ENCODE measurements at regions of chr5 and their contacts with region 1.

Region 1: DNA sequence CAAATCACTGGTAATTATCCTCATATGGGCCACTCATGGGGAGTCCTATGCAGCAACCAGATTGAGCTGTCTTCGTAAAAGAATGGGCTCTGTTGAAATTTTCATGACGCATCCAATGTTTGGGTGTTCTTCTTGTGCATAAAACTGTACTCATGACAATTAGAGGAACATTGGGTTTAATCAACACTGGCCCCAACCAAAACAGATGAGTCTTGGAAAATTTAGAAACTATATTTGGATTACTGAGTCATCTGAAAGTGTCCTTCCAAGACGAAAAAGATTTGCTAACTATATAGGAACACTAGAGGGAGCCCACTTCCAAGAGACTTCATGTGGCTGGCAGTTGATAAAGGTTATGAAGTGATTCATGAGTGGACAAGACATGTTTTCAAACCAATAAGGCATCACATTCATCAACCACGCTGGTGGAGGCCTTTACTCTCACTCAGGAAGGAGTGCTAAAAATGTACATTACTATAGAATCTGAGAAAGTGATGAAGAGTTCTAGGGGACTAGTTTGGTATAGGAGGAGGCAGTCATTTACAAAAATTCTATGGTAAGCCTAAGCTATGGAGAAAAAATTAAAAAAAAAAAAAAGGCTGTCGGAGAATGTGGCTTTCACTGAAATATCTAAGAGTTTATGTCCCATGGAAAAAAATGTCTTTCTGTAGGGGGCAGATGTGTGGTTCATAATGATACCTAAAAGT is 313.5 kb downstream of the PRDM9 start:
- DNase-seq: no peak
- ATAC-seq: peak in 1 of 2 donors; percentile 41
- H3K4me3 ChIP-seq: no peak overlapping the region
- H3K27ac ChIP-seq: no peak overlapping the region
- H3K4me1 ChIP-seq: no peaks in the 10 kb centered on the region
- H3K27me3 ChIP-seq: no peaks in the 10 kb centered on the region

Region 2: GRCh38 chr5:23614422-23614821 is 206.5 kb before region 1 on chr5:
- intact Hi-C with region 1: no loop called
- DNase-seq: no peak
- ATAC-seq: no peak
- H3K4me3 ChIP-seq: no peak overlapping the region
- H3K27ac ChIP-seq: no peak overlapping the region
- H3K4me1 ChIP-seq: no peaks in the 10 kb centered on the region
- H3K27me3 ChIP-seq: no peaks in the 10 kb centered on the region

Region 3: DNA sequence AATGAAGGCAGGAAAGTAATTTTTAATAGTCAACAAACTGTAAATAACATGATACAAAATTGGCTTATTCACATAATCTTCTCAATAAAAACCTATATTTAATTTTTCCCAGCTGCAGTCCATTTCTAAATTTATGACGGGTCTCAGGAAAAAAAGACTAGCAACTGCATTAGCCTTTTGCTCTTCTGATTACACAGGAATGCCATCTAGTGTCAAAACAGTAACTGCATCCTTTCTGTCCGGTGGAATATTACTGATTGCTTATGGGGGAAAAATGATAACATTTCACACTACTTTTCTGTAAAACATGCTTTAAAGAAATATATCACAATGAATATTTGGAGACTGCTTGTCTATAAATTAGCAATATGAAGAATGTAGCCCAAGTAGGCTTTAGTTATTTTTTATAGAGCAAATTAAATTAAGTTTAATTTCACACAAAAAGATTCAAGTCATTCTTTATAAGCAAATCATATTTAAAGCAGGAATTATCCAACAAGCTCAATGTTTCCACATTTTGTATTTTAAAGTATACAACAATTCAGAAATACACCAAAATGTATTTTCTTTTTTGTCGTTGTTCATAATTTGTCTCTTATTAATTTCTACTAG is 289.2 kb after region 1 on chr5:
- intact Hi-C with region 1: loop called in 1 of 4 experiments (anchors 5 kb)
- DNase-seq: no peak
- ATAC-seq: no peak
- H3K4me3 ChIP-seq: no peak overlapping the region
- H3K27ac ChIP-seq: no peak overlapping the region
- H3K4me1 ChIP-seq: no peaks in the 10 kb centered on the region
- H3K27me3 ChIP-seq: no peaks in the 10 kb centered on the region

Measured in right cardiac atrium (tissue), 5 donors.